PC-3 (cell line): ENCODE measurements at regions of chr10 and their contacts with region 1.

Region 1: DNA sequence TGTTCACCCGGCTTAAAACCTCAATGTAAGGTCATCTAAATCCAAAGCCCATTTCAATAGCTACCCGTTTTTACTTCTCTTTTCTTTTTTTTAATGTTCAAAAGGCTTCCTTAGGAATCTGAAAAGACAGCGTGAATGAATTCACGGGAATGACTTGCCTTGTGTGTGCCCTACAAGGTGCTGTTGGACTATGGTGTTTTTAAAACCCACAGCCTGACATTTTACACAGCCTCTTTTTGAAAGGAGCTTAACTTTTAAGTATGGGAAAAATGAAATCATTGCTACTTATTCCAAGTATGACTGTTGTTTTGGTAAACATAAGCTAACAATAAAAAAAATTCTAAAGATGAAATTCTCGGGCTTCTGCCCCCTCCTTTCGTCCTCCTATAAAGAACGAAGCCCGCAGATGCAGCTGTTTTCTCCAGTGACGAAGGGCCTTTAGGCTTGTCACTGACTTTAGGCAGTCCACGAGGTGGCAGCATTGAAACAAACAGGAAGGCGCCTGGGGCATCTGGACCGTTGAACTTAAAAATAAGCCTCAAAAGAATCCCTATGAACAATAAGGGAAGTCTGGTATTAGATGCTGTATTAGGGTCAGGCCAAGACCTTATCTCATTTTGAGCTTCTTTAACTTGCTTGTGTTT is 141.3 kb downstream of the NRP1 start:
- DNase-seq: peak; percentile 100
- ATAC-seq: peak; percentile 74
- H3K4me3 ChIP-seq: no peak overlapping the region
- H3K27ac ChIP-seq: peak overlapping the region; percentile 72
- H3K4me1 ChIP-seq: peaks cover 54% of the 10 kb centered on the region
- H3K27me3 ChIP-seq: no peaks in the 10 kb centered on the region
- CTCF ChIP-seq: no peak

Region 2: GRCh38 chr10:33164060-33164709 is 29.0 kb before region 1 on chr10:
- CTCF ChIA-PET with region 1: interaction called, 14 read pairs
- POLR2A ChIA-PET with region 1: interaction called, 8 read pairs
- intact Hi-C with region 1: loop called (anchors 1 kb)
- DNase-seq: peak; percentile 94
- ATAC-seq: peak; percentile 88
- H3K4me3 ChIP-seq: peak overlapping the region; percentile 0; the same call in 1 of the 2 replicates
- H3K27ac ChIP-seq: peak overlapping the region; percentile 44
- H3K4me1 ChIP-seq: peaks cover 19% of the 10 kb centered on the region
- H3K27me3 ChIP-seq: no peaks in the 10 kb centered on the region
- CTCF ChIP-seq: no peak

Region 3: GRCh38 chr10:33216661-33217427 is 23.7 kb after region 1 on chr10:
- CTCF ChIA-PET with region 1: interaction called, 6 read pairs
- POLR2A ChIA-PET with region 1: interaction called, 7 read pairs
- intact Hi-C with region 1: loop called (anchors 1 kb)
- DNase-seq: peak; percentile 100
- ATAC-seq: peak; percentile 91
- H3K4me3 ChIP-seq: peak overlapping the region; percentile 6; the same call in 1 of the 2 replicates
- H3K27ac ChIP-seq: peak overlapping the region; percentile 65
- H3K4me1 ChIP-seq: peaks cover 46% of the 10 kb centered on the region
- H3K27me3 ChIP-seq: no peaks in the 10 kb centered on the region
- CTCF ChIP-seq: no peak

Region 4: DNA sequence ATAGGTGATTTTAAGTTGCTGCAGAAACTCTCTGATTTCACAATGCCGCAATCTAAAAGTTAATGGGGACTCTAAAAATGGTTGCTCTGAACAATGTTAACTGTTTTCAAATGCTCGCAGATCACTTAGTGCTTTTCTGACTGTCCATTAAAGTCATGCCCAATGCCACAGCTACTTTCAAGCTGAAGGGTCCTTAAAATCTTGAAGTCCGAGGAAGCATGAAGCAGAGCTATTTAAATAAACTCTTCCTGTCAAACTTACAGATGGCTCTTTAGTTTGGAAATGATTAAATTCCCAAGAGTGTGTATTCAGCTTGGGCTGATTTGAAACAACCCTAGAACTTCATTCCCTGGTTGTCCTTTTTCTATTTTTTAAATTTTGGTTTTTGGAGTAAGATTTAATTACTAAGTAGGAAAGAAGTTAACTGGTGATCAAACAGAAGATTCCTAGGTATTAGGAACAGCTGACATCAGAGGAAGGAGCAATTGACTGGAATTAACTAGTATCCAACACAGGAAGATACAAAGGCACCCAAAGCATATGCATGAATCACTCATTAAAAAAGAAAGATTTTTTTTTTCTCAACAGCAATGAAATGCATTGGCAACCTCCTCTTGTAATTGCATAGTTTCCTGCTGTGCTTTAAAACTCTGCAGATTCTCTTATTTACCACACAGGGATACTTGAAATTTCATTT is 36.2 kb after region 1 on chr10:
- CTCF ChIA-PET with region 1: interaction called, 3 read pairs
- POLR2A ChIA-PET with region 1: no interaction called
- intact Hi-C with region 1: loop called (anchors 1 kb)
- DNase-seq: peak; percentile 77
- ATAC-seq: peak; percentile 79
- H3K4me3 ChIP-seq: no peak overlapping the region
- H3K27ac ChIP-seq: peak overlapping the region; percentile 31
- H3K4me1 ChIP-seq: peaks cover 18% of the 10 kb centered on the region
- H3K27me3 ChIP-seq: no peaks in the 10 kb centered on the region
- CTCF ChIP-seq: no peak

Region 5: GRCh38 chr10:33258967-33259366 is 65.8 kb after region 1 on chr10:
- CTCF ChIA-PET with region 1: interaction called, 32 read pairs
- POLR2A ChIA-PET with region 1: interaction called, 41 read pairs
- intact Hi-C with region 1: loop called (anchors 1 kb)
- DNase-seq: peak; percentile 98
- ATAC-seq: peak; percentile 52
- H3K4me3 ChIP-seq: no peak overlapping the region
- H3K27ac ChIP-seq: peak overlapping the region; percentile 65
- H3K4me1 ChIP-seq: peaks cover 86% of the 10 kb centered on the region
- H3K27me3 ChIP-seq: no peaks in the 10 kb centered on the region
- CTCF ChIP-seq: no peak

Region 6: GRCh38 chr10:33487014-33487776 is 294.0 kb after region 1 on chr10:
- CTCF ChIA-PET with region 1: no interaction called
- POLR2A ChIA-PET with region 1: no interaction called
- intact Hi-C with region 1: no loop called
- DNase-seq: peak; percentile 42
- ATAC-seq: peak; percentile 69
- H3K4me3 ChIP-seq: no peak overlapping the region
- H3K27ac ChIP-seq: no peak overlapping the region
- H3K4me1 ChIP-seq: no peaks in the 10 kb centered on the region
- H3K27me3 ChIP-seq: no peaks in the 10 kb centered on the region
- CTCF ChIP-seq: peak; percentile 46